MCF 10A (cell line): ENCODE measurements at regions of chr1 and their contacts with region 1.

Region 1: DNA sequence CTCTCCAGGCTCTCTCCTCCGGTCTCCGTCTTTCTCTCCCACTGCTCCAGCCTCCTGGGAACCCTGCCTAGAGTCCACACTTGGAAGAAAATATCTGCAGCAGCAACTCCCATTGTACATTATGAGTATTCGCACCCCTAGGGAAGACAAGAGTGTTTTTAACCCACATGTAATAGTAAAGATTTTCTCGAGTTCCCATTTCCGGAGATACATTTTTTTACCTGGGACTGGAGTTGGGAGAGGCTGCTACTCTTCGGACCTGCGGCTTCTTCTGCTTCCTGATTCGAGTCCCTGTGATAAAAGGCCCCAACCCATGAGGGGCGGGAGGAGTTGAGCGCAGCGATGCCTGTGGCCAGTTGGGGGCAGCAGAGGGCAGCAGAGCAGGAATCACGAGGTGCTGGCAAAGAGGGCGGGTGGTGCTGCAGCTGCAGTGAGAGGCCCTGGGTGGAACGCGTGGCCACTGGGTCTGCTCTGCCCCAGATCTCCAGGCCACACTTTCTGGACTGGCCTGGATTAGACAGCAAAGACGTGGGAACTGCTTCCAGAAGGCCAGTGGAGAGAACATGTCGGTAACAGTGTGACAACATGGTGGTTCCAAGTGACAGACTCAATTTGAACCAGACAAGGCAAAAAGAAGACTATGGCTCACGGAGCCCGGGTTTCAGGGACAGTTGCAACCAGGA is 221.0 kb upstream of the CSF3R start:
- DNase-seq: peak; percentile 69
- H3K4me3 Mint-ChIP-seq: no peak overlapping the region
- H3K27ac Mint-ChIP-seq: no peak overlapping the region
- H3K4me1 Mint-ChIP-seq: no peaks in the 10 kb centered on the region
- H3K27me3 Mint-ChIP-seq: peaks cover 60% of the 10 kb centered on the region
- CTCF ChIP-seq: peak; percentile 94

Region 2: GRCh38 chr1:36366091-36366661 is 337.5 kb before region 1 on chr1:
- CTCF ChIA-PET with region 1: no interaction called
- POLR2A ChIA-PET with region 1: no interaction called
- intact Hi-C with region 1: no loop called
- DNase-seq: no peak
- H3K4me3 Mint-ChIP-seq: no peak overlapping the region
- H3K27ac Mint-ChIP-seq: peak overlapping the region; percentile 64
- H3K4me1 Mint-ChIP-seq: peaks cover 16% of the 10 kb centered on the region
- H3K27me3 Mint-ChIP-seq: no peaks in the 10 kb centered on the region
- CTCF ChIP-seq: no peak

Region 3: DNA sequence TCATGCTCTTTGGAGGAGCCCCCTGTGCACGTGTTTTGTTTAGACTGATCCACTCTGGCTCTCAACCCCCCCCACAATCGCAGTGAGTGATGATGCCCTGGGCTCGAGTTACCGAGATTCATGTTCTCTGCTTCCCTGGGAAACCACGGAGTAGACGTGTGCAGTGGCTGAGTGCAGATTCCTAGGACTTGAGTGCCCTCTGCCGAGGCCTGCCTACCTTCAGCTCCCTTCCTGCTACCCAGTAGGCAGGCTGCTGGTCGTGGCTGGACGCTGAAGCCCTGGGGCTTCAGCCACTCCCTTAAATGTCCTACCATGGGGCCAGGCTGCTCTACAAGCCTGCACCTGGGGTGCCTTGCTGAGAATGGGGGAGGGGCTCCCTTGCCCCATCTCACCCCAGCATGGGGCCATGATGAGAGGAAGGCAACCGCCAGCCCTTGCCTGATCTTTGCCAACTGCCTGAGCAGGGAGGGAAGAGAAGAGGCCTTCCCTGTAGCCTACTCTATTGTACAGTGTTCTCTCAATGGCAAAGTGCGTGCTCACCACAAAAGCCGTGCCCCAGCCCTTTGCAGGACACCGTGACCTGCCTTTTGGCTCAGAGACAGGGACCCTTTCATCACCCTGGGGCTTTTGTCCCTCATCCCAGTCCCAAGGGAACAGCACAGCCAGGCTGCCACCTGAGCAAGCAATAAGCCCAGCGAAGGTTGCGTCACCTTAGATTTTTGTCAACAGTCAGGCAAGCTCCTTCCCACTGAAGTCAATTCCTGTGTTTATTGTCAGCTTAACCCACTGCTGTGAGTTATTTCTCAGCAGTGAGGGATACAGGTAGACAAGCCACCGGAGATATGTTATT is 334.8 kb after region 1 on chr1:
- CTCF ChIA-PET with region 1: no interaction called
- POLR2A ChIA-PET with region 1: no interaction called
- intact Hi-C with region 1: loop called (anchors 1 kb)
- DNase-seq: peak; percentile 21
- H3K4me3 Mint-ChIP-seq: no peak overlapping the region
- H3K27ac Mint-ChIP-seq: no peak overlapping the region
- H3K4me1 Mint-ChIP-seq: no peaks in the 10 kb centered on the region
- H3K27me3 Mint-ChIP-seq: peaks cover 12% of the 10 kb centered on the region
- CTCF ChIP-seq: no peak

Region 4: GRCh38 chr1:37323486-37324377 is 620.1 kb after region 1 on chr1:
- CTCF ChIA-PET with region 1: interaction called, 3 read pairs
- POLR2A ChIA-PET with region 1: no interaction called
- intact Hi-C with region 1: loop called (anchors 1 kb)
- DNase-seq: peak; percentile 65
- H3K4me3 Mint-ChIP-seq: no peak overlapping the region
- H3K27ac Mint-ChIP-seq: no peak overlapping the region
- H3K4me1 Mint-ChIP-seq: no peaks in the 10 kb centered on the region
- H3K27me3 Mint-ChIP-seq: peaks cover 34% of the 10 kb centered on the region
- CTCF ChIP-seq: peak; percentile 84